Panc1 (cell line): ENCODE measurements at regions of chr1 and their contacts with region 1.

Region 1: DNA sequence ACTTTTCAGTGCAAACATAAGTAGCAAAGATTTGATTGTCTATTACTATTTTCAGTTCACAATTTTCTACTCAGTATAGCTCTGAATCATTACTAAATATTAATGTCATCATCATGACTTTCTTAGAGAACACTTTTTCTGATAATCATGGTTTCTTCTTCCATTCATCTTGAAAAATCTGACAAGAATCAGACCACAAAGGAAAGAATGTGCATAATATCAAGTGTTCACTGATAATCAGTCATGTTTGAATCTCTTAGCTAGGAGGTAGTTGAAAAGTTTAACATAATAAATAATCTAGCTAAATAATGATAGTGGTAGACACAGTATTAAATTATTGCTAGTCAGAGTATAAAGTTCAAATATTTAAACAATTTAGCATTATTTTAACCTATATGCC is 133.2 kb downstream of the BRINP3 start:
- DNase-seq: no peak
- ATAC-seq: no peak
- H3K4me3 ChIP-seq: no peak overlapping the region
- H3K27ac ChIP-seq: no peak overlapping the region
- H3K4me1 ChIP-seq: no peaks in the 10 kb centered on the region
- H3K27me3 ChIP-seq: no peaks in the 10 kb centered on the region
- CTCF ChIP-seq: no peak

Region 2: DNA sequence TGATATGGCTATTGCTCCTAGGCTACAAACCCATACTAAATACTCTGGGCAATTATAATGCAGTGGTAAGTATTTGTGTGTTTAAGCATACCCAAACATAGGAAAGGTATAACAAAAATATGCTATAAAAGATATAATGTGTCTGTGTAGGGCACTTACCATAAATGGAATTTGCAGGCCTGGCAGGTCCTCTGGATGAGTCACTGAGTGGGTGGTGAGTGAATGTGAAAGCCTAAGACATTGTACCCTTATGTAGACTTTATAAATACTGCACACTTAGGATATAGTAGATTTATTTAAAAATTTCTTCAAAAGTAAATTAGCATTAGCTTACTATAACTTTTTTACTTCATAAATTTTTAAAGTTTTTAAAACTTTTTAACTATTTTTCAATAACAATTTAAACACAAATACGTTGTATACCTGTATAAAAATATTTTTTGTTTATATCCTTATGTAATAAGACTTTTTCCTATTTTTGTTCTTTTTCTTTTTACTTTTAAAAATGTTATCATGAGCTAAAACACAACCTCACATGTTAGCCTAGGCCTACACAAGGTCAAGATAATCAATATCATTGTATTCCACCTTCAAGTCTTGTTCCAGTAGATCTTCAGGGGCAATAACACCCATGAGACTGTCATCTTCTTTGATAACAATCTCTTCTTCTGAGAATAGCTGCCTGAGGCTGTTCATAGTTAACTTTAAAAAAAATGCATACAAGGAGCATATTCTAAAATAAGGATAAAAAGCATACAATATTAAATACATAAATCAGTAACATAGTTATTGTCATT is 1507.5 kb after region 1 on chr1:
- CTCF ChIA-PET with region 1: no interaction called
- POLR2A ChIA-PET with region 1: no interaction called
- in situ Hi-C with region 1: no loop called
- intact Hi-C with region 1: loop called (anchors 10 kb)
- DNase-seq: no peak
- ATAC-seq: no peak
- H3K4me3 ChIP-seq: no peak overlapping the region
- H3K27ac ChIP-seq: no peak overlapping the region
- H3K4me1 ChIP-seq: no peaks in the 10 kb centered on the region
- H3K27me3 ChIP-seq: no peaks in the 10 kb centered on the region
- CTCF ChIP-seq: no peak